OCI-LY7 (cell line): ENCODE measurements at regions of chr9 and their contacts with region 1.

Region 1: GRCh38 chr9:36023260-36024048 is 13.3 kb upstream of the RECK start:
- DNase-seq: peak; percentile 76
- H3K4me3 ChIP-seq: no peak overlapping the region
- H3K27ac ChIP-seq: no peak overlapping the region
- H3K4me1 ChIP-seq: no peaks in the 10 kb centered on the region
- CTCF ChIP-seq: peak; percentile 95

Region 2: GRCh38 chr9:35756275-35757225 is 266.9 kb before region 1 on chr9:
- CTCF ChIA-PET with region 1: no interaction called
- POLR2A ChIA-PET with region 1: no interaction called
- intact Hi-C with region 1: no loop called
- DNase-seq: peak; percentile 91
- H3K4me3 ChIP-seq: peak overlapping the region; percentile 74
- H3K27ac ChIP-seq: peak overlapping the region; percentile 94
- H3K4me1 ChIP-seq: peaks cover 66% of the 10 kb centered on the region
- CTCF ChIP-seq: peak; percentile 84

Region 3: DNA sequence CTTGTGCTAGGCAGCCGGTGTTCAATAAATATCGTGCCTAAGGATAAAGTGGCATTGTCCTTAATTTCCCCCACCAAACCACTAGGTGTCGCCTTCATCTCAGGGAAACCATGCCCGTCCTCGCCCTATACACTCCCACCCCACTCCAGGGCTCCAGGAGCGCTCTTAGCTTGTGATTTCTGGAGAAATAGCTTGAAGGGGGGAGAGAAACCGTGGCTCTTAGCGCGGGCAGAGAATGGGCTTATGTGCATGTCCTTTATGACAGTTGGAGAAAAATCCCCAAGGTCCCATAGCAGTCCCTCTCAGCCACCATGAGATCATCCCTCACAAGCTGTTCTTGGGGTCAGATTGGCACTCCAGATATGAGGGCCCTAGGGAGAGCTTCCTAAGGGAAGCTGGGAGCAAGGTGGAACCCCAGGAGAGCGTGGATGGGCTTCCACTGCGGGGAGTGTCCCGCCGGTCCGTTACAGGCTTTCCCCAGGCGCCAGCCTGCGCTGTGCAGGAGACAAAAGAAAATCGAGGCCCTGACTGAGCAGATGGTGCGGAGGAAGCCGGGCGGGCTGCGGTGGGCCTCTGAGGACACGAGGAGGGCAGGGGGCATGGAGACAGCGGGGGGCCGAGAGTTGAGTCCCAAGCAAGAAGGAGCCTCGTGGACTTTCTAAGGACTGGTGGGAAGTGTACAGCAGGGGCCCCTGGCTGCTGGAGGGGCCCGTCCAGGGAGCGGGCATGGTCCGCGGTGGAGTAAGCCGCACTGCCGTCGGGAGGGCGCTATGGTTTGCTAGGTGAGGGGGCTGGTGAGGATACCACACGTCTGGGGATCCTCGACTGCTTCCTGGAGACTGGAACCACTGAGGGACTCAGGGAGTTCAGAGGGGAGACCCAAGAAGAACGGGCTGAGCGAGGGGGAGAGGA is 232.8 kb before region 1 on chr9:
- CTCF ChIA-PET with region 1: no interaction called
- POLR2A ChIA-PET with region 1: no interaction called
- intact Hi-C with region 1: loop called (anchors 10 kb)
- DNase-seq: peak; percentile 73
- H3K4me3 ChIP-seq: no peak overlapping the region
- H3K27ac ChIP-seq: no peak overlapping the region
- H3K4me1 ChIP-seq: peaks cover 12% of the 10 kb centered on the region
- CTCF ChIP-seq: peak; percentile 95

Region 4: DNA sequence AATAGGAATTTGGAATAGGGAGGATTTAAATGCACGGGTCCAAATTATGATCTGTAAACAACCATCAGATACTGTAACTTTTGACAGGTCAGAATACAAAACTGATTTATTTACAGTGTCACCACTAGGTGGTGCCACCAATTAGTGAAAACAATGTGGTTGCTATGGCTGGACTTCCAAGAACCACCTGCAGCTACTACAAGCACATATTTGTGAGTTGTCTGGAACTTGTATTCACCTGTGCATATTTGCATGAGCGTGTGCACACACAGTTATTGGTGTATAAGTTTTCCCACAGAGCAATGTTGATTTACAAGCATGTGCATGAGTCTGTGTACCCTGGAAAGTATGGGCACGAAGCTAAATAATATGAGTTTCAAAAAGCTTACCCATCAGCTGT is 120.4 kb before region 1 on chr9:
- CTCF ChIA-PET with region 1: no interaction called
- POLR2A ChIA-PET with region 1: no interaction called
- intact Hi-C with region 1: loop called (anchors 1 kb)
- DNase-seq: peak; percentile 76
- H3K4me3 ChIP-seq: no peak overlapping the region
- H3K27ac ChIP-seq: no peak overlapping the region
- H3K4me1 ChIP-seq: peaks cover 22% of the 10 kb centered on the region
- CTCF ChIP-seq: peak; percentile 94

Region 5: GRCh38 chr9:35954942-35955546 is 68.4 kb before region 1 on chr9:
- CTCF ChIA-PET with region 1: interaction called, 7 read pairs
- POLR2A ChIA-PET with region 1: interaction called, 4 read pairs
- intact Hi-C with region 1: loop called (anchors 1 kb)
- DNase-seq: peak; percentile 78
- H3K4me3 ChIP-seq: no peak overlapping the region
- H3K27ac ChIP-seq: no peak overlapping the region
- H3K4me1 ChIP-seq: no peaks in the 10 kb centered on the region
- CTCF ChIP-seq: peak; percentile 96

Region 6: DNA sequence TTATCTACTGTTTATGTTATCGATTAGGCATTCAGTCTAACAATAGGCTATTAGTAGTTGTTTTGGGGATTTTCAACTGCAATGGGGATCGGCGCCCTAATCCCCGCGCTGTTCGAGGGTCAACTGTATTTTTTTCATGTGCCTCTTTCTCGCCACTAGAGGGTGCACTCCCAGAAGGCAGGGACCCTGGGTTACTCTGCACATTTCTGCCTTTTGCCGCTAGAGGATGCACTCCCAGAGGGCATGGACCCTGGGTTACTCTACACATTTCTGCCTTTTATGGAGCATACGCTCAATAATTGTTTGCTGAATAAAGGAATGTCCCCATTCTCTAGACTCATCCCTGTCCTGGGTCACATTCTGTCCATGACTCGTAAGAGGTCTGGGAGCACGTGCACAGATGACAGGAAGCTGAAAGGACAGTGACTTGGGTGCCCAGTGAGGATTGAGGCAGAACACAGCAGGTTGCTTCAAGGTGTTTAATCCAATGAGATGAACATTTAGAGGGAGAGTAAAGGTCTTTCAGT is 14.6 kb before region 1 on chr9:
- CTCF ChIA-PET with region 1: interaction called, 3 read pairs
- POLR2A ChIA-PET with region 1: no interaction called
- intact Hi-C with region 1: loop called (anchors 2 kb)
- DNase-seq: peak; percentile 77
- H3K4me3 ChIP-seq: no peak overlapping the region
- H3K27ac ChIP-seq: no peak overlapping the region
- H3K4me1 ChIP-seq: peaks cover 10% of the 10 kb centered on the region
- CTCF ChIP-seq: peak; percentile 100